Activated CD4-positive, alpha-beta T cell treated with anti-CD3 and anti-CD28 coated beads, Interleukin-2, amount 10 ng/mL, durations not matched to agents 24 days and 14 days (primary cell): ENCODE measurements at regions of chr16 and their contacts with region 1.

Region 1: GRCh38 chr16:4416200-4417032 is at the start of gene CORO7:
- DNase-seq: peak; percentile 100
- H3K4me3 Mint-ChIP-seq: peak within 1 kb of the TSS; percentile 93
- H3K27ac Mint-ChIP-seq: peak within 1 kb of the TSS; percentile 89
- H3K4me1 Mint-ChIP-seq: peaks cover 34% of the 10 kb centered on the region
- H3K27me3 Mint-ChIP-seq: peaks cover 6% of the 10 kb centered on the region
- total RNA-seq, gene CORO7: 86.3 and 93.3 TPM in 2 replicates

Region 2: DNA sequence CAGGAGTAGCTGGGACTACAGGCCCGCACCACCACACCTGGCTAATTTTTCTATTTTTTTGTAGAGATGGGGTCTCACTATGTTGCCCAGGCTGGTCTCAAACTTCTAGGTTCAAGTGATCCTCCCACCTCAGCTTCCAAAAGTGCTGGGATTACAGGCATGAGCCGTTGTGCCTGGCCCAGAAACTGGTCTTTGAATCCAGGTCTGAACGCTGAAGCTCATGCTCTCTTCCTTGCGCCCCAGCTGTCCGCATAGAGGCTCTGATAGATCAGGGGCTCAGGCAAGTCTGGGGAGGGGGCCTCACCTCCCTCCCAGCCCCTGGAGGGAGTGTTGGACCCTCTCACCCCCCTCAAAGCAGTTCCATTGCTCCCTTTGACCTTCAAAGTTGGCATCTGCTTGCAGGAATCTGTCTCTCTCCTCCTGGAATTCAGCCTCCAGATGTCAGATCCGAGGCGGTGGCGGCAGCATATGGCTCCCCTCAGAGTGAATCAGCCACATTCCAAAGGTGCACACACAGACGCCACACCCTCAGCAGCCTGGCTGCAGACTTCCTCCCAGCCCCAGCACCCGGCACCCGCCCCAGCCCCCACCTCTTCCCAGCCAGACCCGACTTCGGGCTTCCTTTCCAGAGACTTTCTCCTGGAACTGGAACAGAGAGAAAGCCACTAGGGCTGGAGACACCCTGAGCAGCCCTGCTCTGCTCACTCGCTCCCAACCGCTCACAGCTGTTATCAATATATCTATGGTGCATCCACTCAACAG is 117.5 kb before region 1 on chr16:
- intact Hi-C with region 1: no loop called
- DNase-seq: no peak
- H3K4me3 Mint-ChIP-seq: no peak overlapping the region
- H3K27ac Mint-ChIP-seq: no peak overlapping the region
- H3K4me1 Mint-ChIP-seq: no peaks in the 10 kb centered on the region
- H3K27me3 Mint-ChIP-seq: peaks cover 2% of the 10 kb centered on the region

Region 3: DNA sequence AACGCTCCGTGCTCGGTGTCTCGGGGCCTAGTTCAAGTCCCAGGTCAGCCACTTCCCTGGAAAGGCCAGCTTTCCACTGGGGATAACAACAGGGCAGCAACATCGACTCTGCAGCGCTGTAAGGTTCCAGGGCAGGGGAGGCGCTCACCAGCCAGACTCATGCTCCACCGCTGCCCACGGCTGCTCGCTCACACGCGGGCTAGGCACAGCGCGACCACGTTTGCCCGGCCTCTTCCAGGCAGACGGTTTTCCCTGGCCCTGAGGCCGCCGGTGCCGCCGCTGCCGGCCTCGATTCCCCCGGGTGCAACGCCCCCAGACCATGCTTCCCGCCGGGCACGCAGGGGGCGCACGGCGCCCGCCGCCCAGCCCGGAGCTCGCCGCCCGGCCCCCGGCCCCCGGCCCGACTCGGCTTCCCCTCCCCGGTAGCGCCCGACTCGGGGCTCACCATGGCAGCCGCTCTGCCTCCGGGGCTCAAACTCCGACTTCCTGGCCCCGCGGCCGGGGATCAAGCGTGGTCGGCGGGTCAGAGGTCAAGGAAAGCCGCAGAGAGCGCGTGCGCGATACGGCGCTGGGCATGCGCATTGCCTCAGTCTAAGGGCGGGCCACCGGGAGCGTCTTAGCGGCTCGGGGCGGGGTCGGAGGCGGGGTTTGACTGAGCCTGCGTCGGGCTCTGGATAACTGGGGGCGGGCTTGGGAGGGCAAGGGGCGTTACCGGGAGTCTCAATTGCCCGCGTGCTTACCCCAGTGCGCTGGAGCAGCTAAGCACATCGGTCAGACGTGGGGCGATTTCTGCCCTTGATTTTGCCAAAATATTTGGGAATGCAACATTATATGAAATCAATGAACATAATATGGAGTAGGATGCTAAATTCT is 65.4 kb before region 1 on chr16 and contains the start of gene PAM16:
- intact Hi-C with region 1: loop called (anchors 1 kb)
- DNase-seq: peak; percentile 100
- H3K4me3 Mint-ChIP-seq: peak within 1 kb of the TSS; percentile 96
- H3K27ac Mint-ChIP-seq: peak within 1 kb of the TSS; percentile 94
- H3K4me1 Mint-ChIP-seq: peaks cover 12% of the 10 kb centered on the region
- H3K27me3 Mint-ChIP-seq: no peaks in the 10 kb centered on the region
- total RNA-seq, gene PAM16: 93.5 and 104 TPM in 2 replicates

Region 4: DNA sequence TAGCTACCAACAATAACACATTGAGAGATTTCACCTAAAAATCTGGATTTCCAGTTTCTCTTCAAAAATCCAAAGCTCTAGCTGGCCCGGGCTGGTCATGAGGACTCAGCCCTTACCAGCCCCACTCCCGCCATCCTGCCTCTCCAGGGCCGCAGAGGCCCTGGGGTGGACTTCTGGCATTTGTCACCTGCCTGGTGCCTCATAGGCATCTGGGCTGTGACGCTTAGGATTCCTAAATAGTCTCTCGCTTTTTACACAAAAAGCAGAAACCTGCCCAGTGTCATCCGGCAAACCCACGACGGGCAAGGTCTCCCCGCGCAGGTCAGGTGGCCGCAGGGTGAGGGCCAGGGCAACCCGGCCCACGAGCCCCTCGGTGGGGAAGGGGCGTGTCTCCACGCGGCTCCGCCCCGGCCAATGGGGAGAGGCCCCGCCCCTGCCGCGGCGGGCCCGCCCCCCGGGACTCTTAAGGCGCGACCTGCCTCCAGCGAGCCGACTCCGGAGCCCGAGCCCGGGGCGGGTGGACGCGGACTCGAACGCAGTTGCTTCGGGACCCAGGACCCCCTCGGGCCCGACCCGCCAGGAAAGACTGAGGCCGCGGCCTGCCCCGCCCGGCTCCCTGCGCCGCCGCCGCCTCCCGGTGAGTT is 44.9 kb before region 1 on chr16 and contains the start of gene VASN:
- intact Hi-C with region 1: loop called (anchors 5 kb)
- DNase-seq: peak; percentile 92
- H3K4me3 Mint-ChIP-seq: peak within 1 kb of the TSS; percentile 68
- H3K27ac Mint-ChIP-seq: no peak within 1 kb of the TSS
- H3K4me1 Mint-ChIP-seq: no peaks in the 10 kb centered on the region
- H3K27me3 Mint-ChIP-seq: no peaks in the 10 kb centered on the region
- total RNA-seq, gene VASN: 0.16 TPM in 1 of 2 replicates, not detected in the other

Region 5: DNA sequence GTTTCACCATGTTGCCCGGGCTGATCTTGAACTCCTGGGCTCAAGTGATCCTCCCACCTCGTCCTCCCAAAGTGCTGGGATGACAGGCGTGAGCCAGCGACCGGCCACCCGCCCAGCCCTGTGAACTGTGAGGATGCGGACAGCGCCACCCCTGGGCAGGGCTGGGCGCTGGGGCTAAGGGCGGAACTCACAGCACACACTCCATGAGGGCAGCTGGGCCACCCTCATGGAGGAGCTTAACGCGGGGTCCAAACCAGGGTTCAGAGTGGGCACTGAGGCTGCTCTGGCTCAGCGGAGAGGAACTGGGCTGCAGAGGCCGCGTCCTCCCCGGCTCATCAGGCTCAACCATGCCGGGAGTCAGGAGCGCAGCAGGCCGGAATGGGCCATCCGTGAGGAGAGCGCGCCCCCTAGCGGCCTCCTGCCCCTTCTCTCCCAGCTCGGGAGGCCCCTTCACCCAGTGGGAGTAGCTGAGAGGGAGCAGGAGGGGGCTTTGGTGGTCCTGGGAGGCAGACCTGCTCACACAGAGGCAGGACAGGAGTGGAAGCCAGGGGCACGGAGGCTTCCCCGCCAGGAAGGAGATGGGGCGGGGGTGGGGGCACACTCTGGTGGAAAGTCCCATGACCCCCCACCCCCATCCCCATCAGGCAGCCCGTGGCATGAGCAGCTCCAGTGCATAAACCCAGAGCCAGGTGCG is 13.8 kb before region 1 on chr16:
- intact Hi-C with region 1: no loop called
- DNase-seq: peak; percentile 91
- H3K4me3 Mint-ChIP-seq: no peak overlapping the region
- H3K27ac Mint-ChIP-seq: no peak overlapping the region
- H3K4me1 Mint-ChIP-seq: peaks cover 2% of the 10 kb centered on the region
- H3K27me3 Mint-ChIP-seq: no peaks in the 10 kb centered on the region

Region 6: DNA sequence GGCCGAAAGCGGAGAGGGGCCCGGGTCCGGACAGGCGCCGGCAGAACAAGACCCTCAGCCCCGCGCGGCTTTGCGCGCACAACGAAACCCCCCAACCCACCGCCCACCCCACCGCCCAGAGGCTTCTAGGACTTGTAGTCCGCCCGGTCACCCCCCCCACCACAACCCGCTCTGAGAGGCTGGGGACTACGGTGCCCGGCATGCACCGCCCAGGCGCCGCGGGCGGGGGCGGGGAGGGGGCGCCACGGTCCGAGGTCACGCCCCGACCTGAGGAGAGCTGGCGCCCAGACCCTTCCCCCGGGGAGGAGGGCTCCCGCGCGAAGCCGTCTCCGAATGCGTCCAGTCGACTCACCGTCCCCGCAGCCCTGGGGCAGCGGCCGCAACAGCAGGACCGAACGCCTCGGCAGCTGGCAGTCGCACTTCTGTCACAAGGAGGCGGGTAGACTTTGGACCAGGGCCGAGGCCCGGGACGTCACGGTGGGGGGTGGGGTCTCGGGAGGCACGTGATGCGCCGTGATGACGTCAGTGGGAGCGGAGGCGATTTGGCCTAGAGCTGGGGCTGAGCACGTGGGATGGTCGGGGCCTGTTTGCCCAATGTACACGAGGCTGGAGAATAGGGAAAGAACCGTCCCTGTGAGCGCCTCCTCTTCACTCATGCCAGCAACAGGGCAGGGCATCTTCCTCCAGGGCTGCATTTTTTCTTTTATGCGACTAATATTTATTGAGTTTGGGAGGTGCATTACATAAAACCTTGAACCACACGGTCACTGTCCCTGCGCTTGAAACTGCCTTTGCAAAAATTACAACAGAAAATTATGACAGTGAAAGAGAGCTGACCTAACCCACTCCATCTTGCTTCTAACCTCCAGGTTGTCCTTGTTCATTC is 122.2 kb after region 1 on chr16 and contains the start of gene CDIP1:
- intact Hi-C with region 1: loop called (anchors 5 kb)
- DNase-seq: peak; percentile 97
- H3K4me3 Mint-ChIP-seq: peak within 1 kb of the TSS; percentile 85
- H3K27ac Mint-ChIP-seq: peak within 1 kb of the TSS; percentile 89
- H3K4me1 Mint-ChIP-seq: peaks cover 31% of the 10 kb centered on the region
- H3K27me3 Mint-ChIP-seq: peaks cover 4% of the 10 kb centered on the region
- total RNA-seq, gene CDIP1: 49.4 and 55.2 TPM in 2 replicates